Tibial artery (tissue), 4 donors: ENCODE measurements at regions of chr2 and their contacts with region 1.

Region 1: GRCh38 chr2:50347358-50348044 is 684.4 kb downstream of the NRXN1 start:
- DNase-seq: no peak
- H3K4me3 ChIP-seq: no peak overlapping the region
- H3K27ac ChIP-seq: no peak overlapping the region
- H3K4me1 ChIP-seq: peaks cover 0 to 18% (median 5%) of the 10 kb centered on the region in 4 donors
- H3K27me3 ChIP-seq: peaks cover 0 to 53% of the 10 kb centered on the region in 2 donors
- CTCF ChIP-seq: no peak

Region 2: GRCh38 chr2:49794396-49794795 is 553.1 kb before region 1 on chr2:
- intact Hi-C with region 1: no loop called
- DNase-seq: no peak
- H3K4me3 ChIP-seq: no peak overlapping the region
- H3K27ac ChIP-seq: no peak overlapping the region
- H3K4me1 ChIP-seq: no peaks in the 10 kb centered on the region
- H3K27me3 ChIP-seq: no peaks in the 10 kb centered on the region
- CTCF ChIP-seq: no peak

Region 3: GRCh38 chr2:50133766-50134165 is 213.7 kb before region 1 on chr2:
- intact Hi-C with region 1: no loop called
- DNase-seq: no peak
- H3K4me3 ChIP-seq: no peak overlapping the region
- H3K27ac ChIP-seq: no peak overlapping the region
- H3K4me1 ChIP-seq: no peaks in the 10 kb centered on the region
- H3K27me3 ChIP-seq: no peaks in the 10 kb centered on the region
- CTCF ChIP-seq: no peak

Region 4: GRCh38 chr2:52334185-52334584 is 1986.7 kb after region 1 on chr2:
- intact Hi-C with region 1: loop called (anchors 5 kb)
- DNase-seq: no peak
- H3K4me3 ChIP-seq: no peak overlapping the region
- H3K27ac ChIP-seq: no peak overlapping the region
- H3K4me1 ChIP-seq: no peaks in the 10 kb centered on the region
- H3K27me3 ChIP-seq: no peaks in the 10 kb centered on the region
- CTCF ChIP-seq: no peak